Activated CD4-positive, alpha-beta T cell treated with anti-CD3 and anti-CD28 coated beads for 36 hours (primary cell): ENCODE measurements at regions of chr1 and their contacts with region 1.

Region 1: DNA sequence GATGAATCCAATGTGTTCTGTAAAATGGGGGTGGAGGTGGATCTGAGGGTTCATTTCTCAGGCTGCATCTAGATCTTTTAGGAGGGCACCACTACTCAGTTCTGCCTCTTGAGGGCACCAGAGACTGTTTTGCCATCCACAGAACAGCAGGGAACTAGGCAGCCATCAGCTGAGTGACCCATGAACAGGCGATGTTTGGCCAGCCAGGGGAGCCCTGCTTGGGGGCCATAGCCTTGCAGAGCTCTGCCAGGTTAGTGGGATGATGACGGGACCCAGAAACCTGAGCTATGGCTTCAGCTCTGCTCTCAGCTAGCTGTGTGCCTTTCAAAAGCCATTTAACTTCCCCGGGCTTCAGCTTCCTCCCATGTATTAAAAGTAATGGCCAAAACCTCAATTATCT is 13.4 kb upstream of the NOS1AP start:
- DNase-seq: peak; percentile 68
- ATAC-seq: peak; percentile 84
- H3K4me3 Mint-ChIP-seq: no peak overlapping the region
- H3K27ac Mint-ChIP-seq: no peak overlapping the region
- H3K4me1 Mint-ChIP-seq: no peaks in the 10 kb centered on the region
- H3K27me3 Mint-ChIP-seq: peaks cover 2% of the 10 kb centered on the region

Region 2: DNA sequence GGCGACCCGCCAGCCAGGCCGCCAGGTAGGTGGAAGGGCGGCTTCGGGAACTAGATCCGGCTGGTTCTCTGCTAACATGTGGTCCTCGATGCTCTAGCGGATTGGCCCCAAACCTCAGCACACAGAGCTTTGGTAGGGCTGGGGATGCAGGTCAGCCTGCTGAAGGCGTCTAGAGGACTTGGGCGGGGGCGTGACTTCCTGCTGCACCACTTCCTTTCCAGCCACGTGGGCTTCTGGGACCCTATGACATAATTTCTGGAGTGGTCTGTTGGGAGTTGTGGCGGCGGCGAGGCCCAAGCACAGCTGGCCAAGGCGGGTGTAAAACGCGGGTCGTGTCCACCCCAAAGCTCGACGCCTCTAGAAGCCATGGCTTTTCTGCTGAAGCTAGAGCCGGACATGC is 165.5 kb before region 1 on chr1:
- CTCF ChIA-PET with region 1: no interaction called
- POLR2A ChIA-PET with region 1: no interaction called
- intact Hi-C with region 1: no loop called
- DNase-seq: no peak
- ATAC-seq: no peak
- H3K4me3 Mint-ChIP-seq: no peak overlapping the region
- H3K27ac Mint-ChIP-seq: no peak overlapping the region
- H3K4me1 Mint-ChIP-seq: no peaks in the 10 kb centered on the region
- H3K27me3 Mint-ChIP-seq: no peaks in the 10 kb centered on the region

Region 3: GRCh38 chr1:162276493-162276892 is 220.4 kb after region 1 on chr1:
- CTCF ChIA-PET with region 1: interaction called, 4 read pairs
- POLR2A ChIA-PET with region 1: no interaction called
- intact Hi-C with region 1: loop called (anchors 1 to 2 kb)
- DNase-seq: no peak
- ATAC-seq: no peak
- H3K4me3 Mint-ChIP-seq: no peak overlapping the region
- H3K27ac Mint-ChIP-seq: no peak overlapping the region
- H3K4me1 Mint-ChIP-seq: no peaks in the 10 kb centered on the region
- H3K27me3 Mint-ChIP-seq: peaks cover 17% of the 10 kb centered on the region

Region 4: GRCh38 chr1:162391790-162392563 is 335.9 kb after region 1 on chr1:
- CTCF ChIA-PET with region 1: interaction called, 13 read pairs
- POLR2A ChIA-PET with region 1: no interaction called
- intact Hi-C with region 1: loop called (anchors 1 kb)
- DNase-seq: peak; percentile 35
- ATAC-seq: no peak
- H3K4me3 Mint-ChIP-seq: no peak overlapping the region
- H3K27ac Mint-ChIP-seq: no peak overlapping the region
- H3K4me1 Mint-ChIP-seq: no peaks in the 10 kb centered on the region
- H3K27me3 Mint-ChIP-seq: peaks cover 26% of the 10 kb centered on the region

Region 5: DNA sequence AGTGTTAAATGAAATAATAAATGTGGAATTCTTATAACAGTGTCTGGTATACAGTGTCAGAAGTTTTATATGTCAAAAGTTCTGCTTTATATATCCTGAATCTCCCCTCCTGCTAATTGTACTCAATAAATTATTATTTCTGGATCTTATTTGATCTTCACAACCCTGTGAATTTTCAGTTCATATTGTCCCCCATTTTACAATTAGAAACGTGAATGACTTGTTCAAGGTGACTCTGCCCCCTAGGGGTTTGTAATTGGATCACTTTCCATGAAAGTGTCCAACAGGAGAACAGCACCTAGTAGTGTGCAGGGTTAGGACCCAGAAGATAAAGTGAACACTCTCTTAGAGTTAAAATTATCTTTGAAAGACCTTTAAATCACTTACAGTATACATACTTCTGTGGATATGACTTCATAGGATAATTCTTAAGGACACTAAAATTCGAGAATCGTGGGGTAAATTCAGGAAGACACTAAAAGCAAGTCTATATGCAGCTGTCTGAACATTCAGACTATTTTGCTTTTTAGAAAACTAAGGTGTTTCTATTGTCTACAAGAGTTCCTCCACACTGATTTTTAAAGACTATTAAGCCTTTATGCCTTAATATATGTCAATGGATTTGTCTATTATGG is 571.7 kb after region 1 on chr1:
- CTCF ChIA-PET with region 1: no interaction called
- POLR2A ChIA-PET with region 1: no interaction called
- intact Hi-C with region 1: loop called in 1 of 2 experiments (anchors 5 kb)
- DNase-seq: no peak
- ATAC-seq: peak; percentile 64
- H3K4me3 Mint-ChIP-seq: no peak overlapping the region
- H3K27ac Mint-ChIP-seq: no peak overlapping the region
- H3K4me1 Mint-ChIP-seq: peaks cover 2% of the 10 kb centered on the region
- H3K27me3 Mint-ChIP-seq: peaks cover 15% of the 10 kb centered on the region